ENCODE measurements at regions of chr6 and their contacts with region 1.

Region 1: GRCh38 chr6:25601800-25602673 is 50.0 kb upstream of the SCGN start:
- DNase-seq: peak; percentile 7
- H3K4me3 ChIP-seq: no peak overlapping the region
- CTCF ChIP-seq: peak; percentile 15

Region 2: DNA sequence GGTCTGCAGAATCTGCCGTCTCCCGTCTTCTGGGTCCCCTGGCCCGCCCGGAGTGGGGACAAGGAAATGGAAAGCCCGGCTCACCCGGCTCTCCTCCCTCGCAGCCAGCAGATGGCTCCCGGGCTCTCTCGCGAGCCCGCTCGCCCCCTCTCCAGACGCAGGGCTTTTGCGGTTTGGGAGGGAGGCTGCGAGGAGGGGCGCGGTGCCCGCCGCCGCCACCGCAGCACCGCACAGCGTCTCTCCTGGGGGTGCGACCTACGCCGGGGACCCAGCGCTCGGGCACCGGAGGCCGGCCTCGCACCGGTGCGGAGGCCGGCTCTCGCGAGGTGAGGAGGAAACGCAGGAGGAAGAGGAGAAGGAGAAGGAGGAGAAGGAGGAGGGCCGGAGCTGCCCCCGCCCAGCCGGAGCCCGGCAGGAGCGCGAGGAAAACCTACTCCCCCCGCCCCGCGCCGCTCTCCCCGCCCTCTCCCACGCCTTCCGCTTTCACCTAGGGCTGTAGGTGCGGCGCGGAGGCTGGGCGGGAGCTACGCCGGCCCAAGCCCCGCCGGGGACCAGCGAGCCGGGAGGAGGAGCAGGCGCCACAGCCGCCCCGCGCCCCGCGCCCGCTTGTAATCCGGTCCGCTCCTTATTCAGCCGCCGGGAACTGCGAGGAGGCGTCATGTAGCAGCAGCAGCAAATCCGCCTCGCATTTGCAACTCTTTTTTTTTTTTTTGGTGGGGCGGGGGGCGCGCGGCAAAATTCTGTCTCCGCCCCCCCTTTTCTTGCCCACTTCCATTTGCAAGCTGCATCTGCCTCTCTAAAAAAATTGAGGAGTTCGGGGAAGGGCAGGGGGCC is 322.9 kb before region 1 on chr6 and contains the start of gene CARMIL1:
- CTCF ChIA-PET with region 1: interaction called, 11 read pairs
- POLR2A ChIA-PET with region 1: no interaction called
- DNase-seq: no peak
- H3K4me3 ChIP-seq: peak within 1 kb of the TSS; percentile 71
- CTCF ChIP-seq: peak; percentile 73